Calu3 (cell line): ENCODE measurements at regions of chr12 and their contacts with region 1.

Region 1: GRCh38 chr12:120228291-120229070 is 27.6 kb upstream of the RPLP0 start:
- DNase-seq: peak; percentile 96
- H3K4me3 Mint-ChIP-seq: peak overlapping the region; percentile 31
- H3K27ac Mint-ChIP-seq: peak overlapping the region; percentile 83
- H3K4me1 Mint-ChIP-seq: peaks cover 94% of the 10 kb centered on the region
- H3K27me3 Mint-ChIP-seq: no peaks in the 10 kb centered on the region
- CTCF ChIP-seq: peak; percentile 87

Region 2: GRCh38 chr12:118830296-118830695 is 1398.2 kb before region 1 on chr12:
- CTCF ChIA-PET with region 1: no interaction called
- intact Hi-C with region 1: no loop called
- DNase-seq: no peak
- H3K4me3 Mint-ChIP-seq: no peak overlapping the region
- H3K27ac Mint-ChIP-seq: no peak overlapping the region
- H3K4me1 Mint-ChIP-seq: no peaks in the 10 kb centered on the region
- H3K27me3 Mint-ChIP-seq: no peaks in the 10 kb centered on the region
- CTCF ChIP-seq: no peak

Region 3: GRCh38 chr12:120199595-120200306 is 28.7 kb before region 1 on chr12:
- CTCF ChIA-PET with region 1: interaction called, 18 read pairs
- intact Hi-C with region 1: no loop called
- DNase-seq: peak; percentile 30
- H3K4me3 Mint-ChIP-seq: peak overlapping the region; percentile 85
- H3K27ac Mint-ChIP-seq: peak overlapping the region; percentile 96
- H3K4me1 Mint-ChIP-seq: peaks cover 22% of the 10 kb centered on the region
- H3K27me3 Mint-ChIP-seq: no peaks in the 10 kb centered on the region
- CTCF ChIP-seq: no peak

Region 4: GRCh38 chr12:120249875-120250795 is 21.7 kb after region 1 on chr12:
- CTCF ChIA-PET with region 1: interaction called, 13 read pairs
- intact Hi-C with region 1: no loop called
- DNase-seq: no peak
- H3K4me3 Mint-ChIP-seq: no peak overlapping the region
- H3K27ac Mint-ChIP-seq: no peak overlapping the region
- H3K4me1 Mint-ChIP-seq: peaks cover 49% of the 10 kb centered on the region
- H3K27me3 Mint-ChIP-seq: no peaks in the 10 kb centered on the region
- CTCF ChIP-seq: no peak

Region 5: DNA sequence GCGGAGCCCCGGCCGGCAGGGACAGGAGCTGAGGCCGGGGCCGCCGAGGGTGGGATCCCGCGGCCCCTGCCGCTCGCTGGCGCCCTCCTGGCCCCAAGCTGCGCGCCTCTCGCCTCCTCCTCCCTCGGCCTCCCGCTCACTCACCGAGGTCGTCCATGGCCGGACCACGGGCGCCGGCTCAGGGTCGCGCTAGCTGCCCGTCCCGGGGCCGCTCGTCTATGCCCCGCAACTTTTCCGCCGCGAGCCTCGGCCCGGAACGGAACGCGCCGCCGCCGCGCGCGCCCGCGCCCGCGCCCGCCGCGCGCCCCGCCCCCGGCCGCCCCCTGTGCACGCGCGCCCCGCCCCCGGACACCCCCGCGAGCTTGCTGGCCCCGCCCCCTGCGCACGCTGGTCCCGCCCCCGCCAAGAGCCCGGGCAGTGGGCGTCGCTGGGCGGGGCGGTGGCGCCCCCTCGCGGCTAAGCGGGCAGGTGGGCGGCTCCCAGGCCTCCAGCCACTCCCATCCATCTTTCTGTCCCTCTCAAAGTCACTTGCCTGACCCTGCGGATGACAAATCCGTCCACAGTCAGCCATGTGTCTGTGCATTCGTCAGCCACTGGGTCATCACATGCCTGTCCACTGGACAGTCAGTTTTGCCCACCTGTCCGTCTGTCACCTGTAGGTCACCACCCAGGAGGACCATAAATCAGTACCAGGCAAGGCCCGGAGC is 37.1 kb after region 1 on chr12 and contains the start of gene PXN:
- CTCF ChIA-PET with region 1: interaction called, 338 read pairs
- intact Hi-C with region 1: loop called (anchors 1 kb)
- DNase-seq: peak; percentile 97
- H3K4me3 Mint-ChIP-seq: peak within 1 kb of the TSS; percentile 87
- H3K27ac Mint-ChIP-seq: peak within 1 kb of the TSS; percentile 74
- H3K4me1 Mint-ChIP-seq: peaks cover 35% of the 10 kb centered on the region
- H3K27me3 Mint-ChIP-seq: no peaks in the 10 kb centered on the region
- CTCF ChIP-seq: peak; percentile 89
- total RNA-seq, gene PXN: 156 and 172 TPM in 2 replicates

Region 6: GRCh38 chr12:120292661-120293531 is 64.4 kb after region 1 on chr12 and contains the start of gene RNU4-1:
- CTCF ChIA-PET with region 1: interaction called, 53 read pairs
- intact Hi-C with region 1: loop called (anchors 1 kb)
- DNase-seq: peak; percentile 81
- H3K4me3 Mint-ChIP-seq: no peak within 1 kb of the TSS
- H3K27ac Mint-ChIP-seq: no peak within 1 kb of the TSS
- H3K4me1 Mint-ChIP-seq: peaks cover 15% of the 10 kb centered on the region
- H3K27me3 Mint-ChIP-seq: no peaks in the 10 kb centered on the region
- CTCF ChIP-seq: no peak
- total RNA-seq, gene RNU4-1: 2,759 and 3,670 TPM in 2 replicates

Region 7: GRCh38 chr12:120301962-120302815 is 73.7 kb after region 1 on chr12 and contains the start of gene SIRT4:
- CTCF ChIA-PET with region 1: interaction called, 13 read pairs
- intact Hi-C with region 1: no loop called
- DNase-seq: peak; percentile 91
- H3K4me3 Mint-ChIP-seq: peak within 1 kb of the TSS; percentile 94
- H3K27ac Mint-ChIP-seq: peak within 1 kb of the TSS; percentile 88
- H3K4me1 Mint-ChIP-seq: peaks cover 15% of the 10 kb centered on the region
- H3K27me3 Mint-ChIP-seq: peaks cover 13% of the 10 kb centered on the region
- CTCF ChIP-seq: no peak
- total RNA-seq, gene SIRT4: 1.1 and 1.6 TPM in 2 replicates